Caco-2 (cell line): ENCODE measurements at regions of chr5 and their contacts with region 1.

Region 1: DNA sequence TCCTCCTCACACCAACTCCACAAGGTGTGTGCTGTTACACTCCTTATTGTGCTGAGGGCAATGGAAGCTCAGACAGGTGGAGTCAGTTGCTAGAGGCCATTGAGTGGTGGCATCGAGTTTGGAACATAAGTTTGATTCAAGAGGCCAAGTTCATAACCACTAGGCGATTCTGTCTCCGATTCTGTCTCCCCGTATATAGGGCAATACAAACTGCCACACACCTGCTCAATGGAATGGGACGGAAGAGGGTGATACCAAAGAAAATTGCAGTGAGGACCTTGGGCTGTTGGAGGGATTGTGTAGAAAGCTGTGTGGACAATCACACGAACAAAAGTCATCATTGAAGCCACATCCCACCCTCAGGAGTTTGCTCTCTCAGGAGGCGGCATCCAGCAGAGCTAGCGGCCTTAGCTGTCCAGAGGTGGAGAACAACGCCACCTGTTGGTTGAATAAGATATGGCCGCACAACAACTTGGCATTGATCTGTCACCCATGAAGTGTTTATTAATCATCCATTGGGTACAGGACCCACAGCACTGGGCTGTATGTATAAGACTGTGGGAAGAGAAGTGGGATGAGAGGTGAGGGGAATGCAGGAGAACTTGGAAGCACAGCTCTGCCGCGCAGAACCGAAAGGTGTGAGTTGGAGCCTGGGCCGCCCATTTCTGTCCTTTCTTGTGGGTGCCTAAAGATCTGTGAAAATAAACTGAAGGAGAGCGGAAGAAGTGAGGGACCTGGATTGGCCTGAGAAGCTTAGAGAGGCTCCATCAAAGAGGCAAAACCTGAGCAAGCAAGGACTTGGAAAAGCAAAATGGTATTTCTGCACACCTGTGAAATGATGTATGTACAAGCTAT is 16.1 kb upstream of the NEUROG1 start:
- DNase-seq: peak; percentile 78 to 82
- H3K4me3 ChIP-seq: no peak overlapping the region
- H3K4me3 Mint-ChIP-seq: no peak overlapping the region
- H3K27ac Mint-ChIP-seq: no peak overlapping the region
- H3K4me1 ChIP-seq: no peaks in the 10 kb centered on the region
- H3K4me1 Mint-ChIP-seq: peaks cover 6% of the 10 kb centered on the region
- H3K27me3 ChIP-seq: no peaks in the 10 kb centered on the region
- H3K27me3 Mint-ChIP-seq: peaks cover 10% of the 10 kb centered on the region
- CTCF ChIP-seq: peak; percentile 80 to 82

Region 2: DNA sequence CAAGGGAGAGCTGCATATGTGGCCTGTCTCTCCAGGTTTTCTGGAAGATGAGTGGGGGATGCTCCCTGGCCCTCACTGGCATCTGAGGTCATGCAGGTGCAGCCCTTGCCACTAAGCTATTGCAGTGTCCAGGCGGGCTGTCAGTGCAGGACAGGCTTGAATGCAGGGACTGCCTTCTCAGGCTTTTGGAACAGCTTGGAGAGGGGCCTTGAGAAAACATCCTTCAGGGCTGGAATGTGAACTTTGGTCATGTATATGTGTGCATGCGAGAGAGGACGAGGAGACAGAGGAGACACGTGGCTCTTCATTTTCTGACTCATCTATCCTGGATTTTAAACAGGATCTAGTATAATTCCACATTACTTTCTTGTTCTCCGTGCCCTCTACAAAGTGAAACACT is 243.1 kb before region 1 on chr5:
- CTCF ChIA-PET with region 1: no interaction called
- POLR2A ChIA-PET with region 1: no interaction called
- intact Hi-C with region 1: no loop called
- DNase-seq: peak; percentile 91 to 95
- H3K4me3 ChIP-seq: no peak overlapping the region
- H3K4me3 Mint-ChIP-seq: peak overlapping the region; percentile 69
- H3K27ac Mint-ChIP-seq: peak overlapping the region; percentile 97
- H3K4me1 ChIP-seq: peaks cover 75% of the 10 kb centered on the region
- H3K4me1 Mint-ChIP-seq: peaks cover 76% of the 10 kb centered on the region
- H3K27me3 ChIP-seq: no peaks in the 10 kb centered on the region
- H3K27me3 Mint-ChIP-seq: no peaks in the 10 kb centered on the region
- CTCF ChIP-seq: no peak

Region 3: GRCh38 chr5:135398853-135399523 is 152.8 kb before region 1 on chr5 and contains the start of gene MACROH2A1:
- CTCF ChIA-PET with region 1: no interaction called
- POLR2A ChIA-PET with region 1: no interaction called
- intact Hi-C with region 1: no loop called
- DNase-seq: peak; percentile 84 to 90
- H3K4me3 ChIP-seq: peak within 1 kb of the TSS; percentile 73
- H3K4me3 Mint-ChIP-seq: peak within 1 kb of the TSS; percentile 88
- H3K27ac Mint-ChIP-seq: peak within 1 kb of the TSS; percentile 91
- H3K4me1 ChIP-seq: peaks cover 30% of the 10 kb centered on the region
- H3K4me1 Mint-ChIP-seq: peaks cover 36% of the 10 kb centered on the region
- H3K27me3 ChIP-seq: no peaks in the 10 kb centered on the region
- H3K27me3 Mint-ChIP-seq: no peaks in the 10 kb centered on the region
- CTCF ChIP-seq: no peak
- total RNA-seq, gene MACROH2A1: 236 and 269 TPM in 2 replicates

Region 4: DNA sequence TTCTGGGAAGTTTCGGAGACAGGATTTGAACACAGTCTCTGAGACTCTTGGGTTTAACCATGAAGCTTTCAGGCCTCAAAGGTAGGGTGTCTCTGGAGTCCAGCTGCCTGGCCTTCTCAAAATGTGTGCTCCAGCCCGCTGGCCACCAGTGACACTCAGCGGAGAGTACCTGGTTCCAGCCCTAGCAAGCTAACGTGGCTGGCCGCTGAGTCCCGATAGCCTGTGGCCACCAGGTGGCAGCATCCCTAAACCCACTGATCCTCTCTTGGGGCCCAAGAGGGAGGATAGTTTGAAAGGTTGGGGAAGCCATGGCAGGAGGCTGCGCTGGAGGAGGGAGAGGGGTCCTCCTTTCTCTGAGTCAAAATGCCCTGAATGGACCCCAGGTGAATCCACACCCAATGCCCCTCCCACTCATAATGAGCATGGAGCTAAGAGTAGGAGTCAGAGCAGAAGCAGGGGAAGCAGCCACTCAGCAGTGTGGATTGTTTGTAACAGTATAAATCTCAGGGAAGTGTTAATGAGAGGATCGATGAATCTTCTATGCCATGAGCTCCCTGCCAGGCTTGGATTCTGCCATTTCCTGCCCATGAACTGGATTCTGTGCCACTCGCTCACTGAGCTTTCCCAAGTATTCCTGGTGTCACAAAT is 94.3 kb before region 1 on chr5:
- CTCF ChIA-PET with region 1: interaction called, 311 read pairs
- POLR2A ChIA-PET with region 1: no interaction called
- intact Hi-C with region 1: loop called (anchors 1 kb)
- DNase-seq: peak; percentile 69 to 72
- H3K4me3 ChIP-seq: no peak overlapping the region
- H3K4me3 Mint-ChIP-seq: no peak overlapping the region
- H3K27ac Mint-ChIP-seq: no peak overlapping the region
- H3K4me1 ChIP-seq: peaks cover 3% of the 10 kb centered on the region; the same call in 1 of the 2 replicates
- H3K4me1 Mint-ChIP-seq: no peaks in the 10 kb centered on the region
- H3K27me3 ChIP-seq: no peaks in the 10 kb centered on the region
- H3K27me3 Mint-ChIP-seq: peaks cover 16% of the 10 kb centered on the region
- CTCF ChIP-seq: peak; percentile 54 to 85

Region 5: DNA sequence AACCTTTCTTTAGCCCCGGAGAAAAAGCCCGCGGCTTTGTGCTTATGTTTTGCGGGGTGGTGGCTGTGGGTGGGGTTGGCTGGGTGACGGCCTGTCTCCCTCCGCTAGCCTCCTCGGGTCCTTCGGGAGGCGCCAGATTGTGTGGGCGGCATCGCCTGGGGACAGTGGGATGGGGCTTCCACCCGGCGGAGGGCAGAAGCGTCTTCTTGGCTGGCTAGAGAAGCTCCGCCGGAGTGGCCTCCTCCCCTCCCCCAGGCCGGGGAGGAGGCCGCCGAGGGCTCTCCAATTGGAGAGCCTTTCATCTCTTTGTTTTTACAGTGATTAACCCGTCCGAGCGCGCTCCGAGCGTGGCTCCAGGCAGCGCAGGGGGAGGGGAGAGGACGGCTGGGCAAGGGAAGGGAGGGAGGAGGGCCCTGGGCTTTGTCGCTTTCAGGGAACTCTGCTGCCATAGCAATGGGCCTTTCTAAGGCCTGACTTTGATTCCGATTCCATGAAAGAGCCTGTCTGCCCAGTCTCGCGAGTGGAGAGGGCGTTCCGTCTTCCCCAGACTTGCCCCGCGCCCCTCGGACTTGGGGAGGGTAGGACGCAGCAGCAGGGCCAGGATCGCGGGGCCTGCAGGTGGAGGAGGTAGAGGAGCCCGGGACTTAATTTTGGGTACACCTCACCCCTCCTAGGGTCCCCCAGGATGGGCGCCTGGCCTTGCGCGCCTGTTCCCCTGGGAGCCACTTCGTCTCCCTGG is 62.9 kb before region 1 on chr5:
- CTCF ChIA-PET with region 1: interaction called, 17 read pairs
- POLR2A ChIA-PET with region 1: no interaction called
- intact Hi-C with region 1: loop called (anchors 2 kb)
- DNase-seq: peak; percentile 83
- H3K4me3 ChIP-seq: peak overlapping the region; percentile 34
- H3K4me3 Mint-ChIP-seq: peak overlapping the region; percentile 72
- H3K27ac Mint-ChIP-seq: peak overlapping the region; percentile 67
- H3K4me1 ChIP-seq: peaks cover 44% of the 10 kb centered on the region
- H3K4me1 Mint-ChIP-seq: peaks cover 30% of the 10 kb centered on the region
- H3K27me3 ChIP-seq: no peaks in the 10 kb centered on the region
- H3K27me3 Mint-ChIP-seq: no peaks in the 10 kb centered on the region
- CTCF ChIP-seq: no peak

Region 6: DNA sequence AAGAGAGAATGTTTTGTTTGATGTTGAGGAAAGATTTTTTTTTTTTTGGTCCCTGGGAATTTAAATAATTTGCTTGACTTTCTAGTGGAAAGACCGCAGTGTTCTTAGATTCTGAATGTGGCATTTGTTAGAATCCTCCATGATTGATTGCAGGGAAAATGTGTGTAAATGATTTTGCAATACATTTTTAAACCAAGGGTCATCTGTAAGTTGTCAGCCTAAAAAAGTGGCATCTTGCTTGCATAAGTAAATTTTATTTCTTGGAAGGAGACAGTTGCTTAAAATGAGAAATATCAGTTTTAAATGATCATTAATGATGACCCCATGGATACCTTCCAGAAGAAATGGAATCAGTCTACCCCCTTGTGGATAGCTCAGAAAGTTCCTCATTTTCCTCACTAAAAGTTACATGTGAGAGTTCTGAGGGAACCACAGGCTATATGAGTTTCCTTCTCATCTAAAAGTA is 177.5 kb after region 1 on chr5:
- CTCF ChIA-PET with region 1: interaction called, 13 read pairs
- POLR2A ChIA-PET with region 1: no interaction called
- intact Hi-C with region 1: no loop called
- DNase-seq: peak in 1 of 2 experiments; percentile 34
- H3K4me3 ChIP-seq: no peak overlapping the region
- H3K4me3 Mint-ChIP-seq: no peak overlapping the region
- H3K27ac Mint-ChIP-seq: no peak overlapping the region
- H3K4me1 ChIP-seq: no peaks in the 10 kb centered on the region
- H3K4me1 Mint-ChIP-seq: no peaks in the 10 kb centered on the region
- H3K27me3 ChIP-seq: no peaks in the 10 kb centered on the region
- H3K27me3 Mint-ChIP-seq: no peaks in the 10 kb centered on the region
- CTCF ChIP-seq: peak; percentile 37 to 59

Region 7: DNA sequence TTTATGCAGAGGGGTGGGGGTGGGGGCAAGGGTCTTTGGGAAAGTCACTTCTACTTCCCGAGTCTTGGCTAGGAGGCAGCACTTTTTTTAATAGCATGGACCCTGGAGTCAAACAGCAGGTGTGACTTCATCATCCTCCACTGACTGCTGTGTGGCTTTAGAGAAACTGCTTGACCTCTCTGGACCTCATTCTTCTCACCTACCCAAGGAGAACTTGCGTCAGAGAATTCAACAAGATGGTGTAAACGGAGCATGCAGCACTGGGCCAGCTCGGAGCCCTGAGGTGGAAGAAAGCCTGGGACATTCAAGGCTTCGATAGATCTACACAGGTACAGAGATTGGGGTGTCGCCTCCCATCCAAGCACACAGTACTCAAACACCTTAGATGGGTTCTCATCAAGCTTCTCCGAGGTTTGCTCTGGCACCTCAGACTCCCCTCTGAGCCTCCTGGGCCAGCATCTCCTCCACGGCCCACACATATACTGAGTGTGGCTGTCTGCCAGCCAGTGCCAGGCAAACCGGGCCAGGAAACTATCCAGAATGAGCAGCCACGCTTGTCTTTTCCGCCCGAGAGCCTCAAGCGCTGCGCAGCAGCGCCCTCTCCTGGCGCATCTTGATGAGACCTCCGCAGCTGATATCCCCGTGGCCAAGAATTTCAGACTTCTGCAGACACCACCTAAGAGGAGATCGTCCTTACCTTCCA is 278.0 kb after region 1 on chr5:
- CTCF ChIA-PET with region 1: interaction called, 27 read pairs
- POLR2A ChIA-PET with region 1: no interaction called
- intact Hi-C with region 1: loop called (anchors 2 kb)
- DNase-seq: peak; percentile 63 to 75
- H3K4me3 ChIP-seq: no peak overlapping the region
- H3K4me3 Mint-ChIP-seq: no peak overlapping the region
- H3K27ac Mint-ChIP-seq: no peak overlapping the region
- H3K4me1 ChIP-seq: no peaks in the 10 kb centered on the region
- H3K4me1 Mint-ChIP-seq: peaks cover 7% of the 10 kb centered on the region
- H3K27me3 ChIP-seq: peaks cover 5% of the 10 kb centered on the region; the same call in 1 of the 2 replicates
- H3K27me3 Mint-ChIP-seq: peaks cover 39% of the 10 kb centered on the region
- CTCF ChIP-seq: peak; percentile 86 to 93

Region 8: DNA sequence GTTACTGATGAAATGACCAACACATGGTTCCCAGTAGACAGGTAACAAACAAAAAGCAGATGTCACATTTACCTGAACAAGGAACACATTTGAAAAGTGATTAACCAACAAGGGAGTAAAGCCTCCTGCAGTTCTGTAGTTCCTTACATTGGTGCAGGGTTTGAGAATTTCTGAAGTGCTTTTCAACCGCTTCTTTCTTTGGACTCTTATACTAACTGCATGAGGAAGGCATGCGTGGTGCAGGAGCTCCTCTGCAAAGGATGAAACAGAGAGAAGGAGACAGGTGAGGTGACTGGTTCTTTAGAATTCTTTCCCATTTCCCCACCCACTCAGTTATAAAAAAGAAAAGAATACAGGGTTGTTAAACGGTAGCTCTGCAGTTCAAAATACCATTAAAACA is 348.5 kb after region 1 on chr5:
- CTCF ChIA-PET with region 1: no interaction called
- POLR2A ChIA-PET with region 1: no interaction called
- intact Hi-C with region 1: no loop called
- DNase-seq: no peak
- H3K4me3 ChIP-seq: no peak overlapping the region
- H3K4me3 Mint-ChIP-seq: no peak overlapping the region
- H3K27ac Mint-ChIP-seq: no peak overlapping the region
- H3K4me1 ChIP-seq: peaks cover 32% of the 10 kb centered on the region
- H3K4me1 Mint-ChIP-seq: peaks cover 27% of the 10 kb centered on the region
- H3K27me3 ChIP-seq: no peaks in the 10 kb centered on the region
- H3K27me3 Mint-ChIP-seq: peaks cover 4% of the 10 kb centered on the region
- CTCF ChIP-seq: no peak

Region 9: GRCh38 chr5:136212252-136212721 is 660.5 kb after region 1 on chr5:
- CTCF ChIA-PET with region 1: no interaction called
- POLR2A ChIA-PET with region 1: no interaction called
- intact Hi-C with region 1: loop called (anchors 2 kb)
- DNase-seq: peak; percentile 68 to 70
- H3K4me3 ChIP-seq: no peak overlapping the region
- H3K4me3 Mint-ChIP-seq: no peak overlapping the region
- H3K27ac Mint-ChIP-seq: no peak overlapping the region
- H3K4me1 ChIP-seq: no peaks in the 10 kb centered on the region
- H3K4me1 Mint-ChIP-seq: no peaks in the 10 kb centered on the region
- H3K27me3 ChIP-seq: no peaks in the 10 kb centered on the region
- H3K27me3 Mint-ChIP-seq: no peaks in the 10 kb centered on the region
- CTCF ChIP-seq: peak; percentile 93 to 94